Thyroid gland (tissue), 4 donors: ENCODE measurements at regions of chr17 and their contacts with region 1.

Region 1: GRCh38 chr17:43483674-43484372 is at the start of gene DHX8:
- DNase-seq: peak; percentile 98
- H3K4me3 ChIP-seq: peak within 1 kb of the TSS; percentile 47 to 82 (median 77)
- H3K27ac ChIP-seq: peak within 1 kb of the TSS; percentile 61 to 86 (median 75)
- H3K4me1 ChIP-seq: peaks cover 24 to 30% of the 10 kb centered on the region in 2 donors
- H3K27me3 ChIP-seq: no peaks in the 10 kb centered on the region
- CTCF ChIP-seq: peak; percentile 99 to 100 (median 100)
- POLR2A ChIP-seq: peak in 1 of 2 donors; percentile 80
- total RNA-seq, gene DHX8: 31.4 to 864 (median 78.8) TPM

Region 2: DNA sequence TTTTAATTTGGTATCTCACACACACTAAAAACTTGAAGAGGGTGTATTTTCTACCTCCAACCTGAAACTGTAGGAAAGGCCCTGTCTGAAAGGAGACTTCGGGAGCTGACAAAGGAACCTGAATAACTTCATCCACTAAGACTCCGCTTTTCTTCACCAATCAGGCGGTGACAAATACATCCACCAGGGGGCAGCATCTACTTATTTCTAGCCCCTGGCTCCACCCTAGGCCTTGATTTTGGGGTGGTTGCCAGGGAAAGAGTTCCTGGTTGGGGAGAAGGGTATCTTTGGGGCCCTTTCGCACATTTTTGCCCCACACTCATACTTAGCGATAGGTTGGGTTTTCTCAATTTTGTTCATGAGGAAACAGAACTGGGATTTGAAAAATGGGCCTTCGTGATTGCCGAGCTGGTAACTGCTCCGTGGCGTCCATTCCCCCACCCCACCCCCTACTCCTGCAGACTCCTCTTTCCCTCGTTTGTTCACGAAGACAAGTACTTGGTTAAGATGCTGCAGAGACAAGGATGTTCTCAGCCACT is 89.8 kb before region 1 on chr17:
- intact Hi-C with region 1: loop called (anchors 2 kb)
- DNase-seq: peak; percentile 93
- H3K4me3 ChIP-seq: no peak overlapping the region
- H3K27ac ChIP-seq: peak overlapping the region in 2 of 3 donors; percentile 44 to 61
- H3K4me1 ChIP-seq: peaks cover 5 to 21% of the 10 kb centered on the region in 2 donors
- H3K27me3 ChIP-seq: no peaks in the 10 kb centered on the region
- CTCF ChIP-seq: peak; percentile 68 to 100 (median 94)
- POLR2A ChIP-seq: no peak

Region 3: GRCh38 chr17:43584666-43585102 is 100.9 kb after region 1 on chr17:
- intact Hi-C with region 1: no loop called
- DNase-seq: no peak
- H3K4me3 ChIP-seq: no peak overlapping the region
- H3K27ac ChIP-seq: no peak overlapping the region
- H3K4me1 ChIP-seq: no peaks in the 10 kb centered on the region
- H3K27me3 ChIP-seq: no peaks in the 10 kb centered on the region
- CTCF ChIP-seq: no peak
- POLR2A ChIP-seq: no peak